SK-N-SH (cell line): ENCODE measurements at regions of chr11 and their contacts with region 1.

Region 1: GRCh38 chr11:66976048-66976467 is 954 bp downstream of the C11orf86 start:
- DNase-seq: peak; percentile 86
- H3K4me3 ChIP-seq: no peak overlapping the region; a peak in 1 of 4 replicates
- H3K27ac ChIP-seq: no peak overlapping the region
- H3K4me1 ChIP-seq: peaks cover 0 to 11% of the 10 kb centered on the region in 2 experiments; a peak in 2 of 4 replicates
- H3K27me3 ChIP-seq: no peaks in the 10 kb centered on the region
- CTCF ChIP-seq: peak; percentile 86
- EP300 ChIP-seq: no peak
- RAD21 ChIP-seq: peak; percentile 90

Region 2: GRCh38 chr11:66834501-66834845 is 141.6 kb before region 1 on chr11:
- CTCF ChIA-PET with region 1: interaction called, 24 read pairs
- POLR2A ChIA-PET with region 1: no interaction called
- DNase-seq: no peak
- H3K4me3 ChIP-seq: no peak overlapping the region
- H3K27ac ChIP-seq: no peak overlapping the region
- H3K4me1 ChIP-seq: peaks cover 0 to 5% of the 10 kb centered on the region in 2 experiments; a peak in 1 of 4 replicates
- H3K27me3 ChIP-seq: no peaks in the 10 kb centered on the region
- CTCF ChIP-seq: no peak
- EP300 ChIP-seq: no peak
- RAD21 ChIP-seq: no peak

Region 3: DNA sequence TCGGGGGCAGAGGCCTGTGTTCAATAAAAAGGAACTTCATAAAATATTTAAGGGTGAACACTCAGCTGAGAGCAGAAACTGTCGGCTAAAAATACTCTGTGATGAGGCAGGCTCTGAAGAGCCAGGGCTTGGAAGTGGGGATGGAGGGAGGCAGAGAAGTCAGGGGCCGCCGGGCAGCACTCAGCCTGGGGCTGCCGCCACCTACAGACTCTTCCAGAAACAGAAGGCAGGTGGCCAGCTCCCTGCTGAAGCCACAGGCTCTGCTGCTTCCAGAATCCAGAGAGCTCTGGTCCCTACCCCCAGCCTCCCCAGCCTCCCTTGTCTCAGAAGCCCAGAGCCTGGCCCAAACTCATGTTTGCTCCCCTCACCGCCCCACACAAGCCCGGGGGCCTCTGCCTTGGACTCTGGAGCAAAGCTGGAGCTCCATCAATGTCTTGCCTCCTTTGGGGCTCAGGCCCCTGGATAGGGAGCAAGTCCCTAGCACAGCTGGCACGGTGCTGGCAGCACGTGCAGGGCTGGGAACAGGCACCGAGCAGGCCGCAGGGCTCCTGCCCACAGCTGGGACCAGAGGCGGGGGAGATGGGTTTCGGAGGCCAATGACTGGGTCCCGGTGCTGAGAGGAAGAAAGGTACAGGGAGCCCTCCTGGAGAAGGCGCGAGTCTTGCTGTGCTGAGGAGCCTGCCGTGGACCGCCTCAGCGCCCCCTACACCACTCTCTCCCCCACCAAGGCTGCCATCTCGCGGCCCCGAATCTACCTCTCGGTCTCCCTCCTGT is 110.9 kb before region 1 on chr11:
- CTCF ChIA-PET with region 1: interaction called, 12 read pairs
- POLR2A ChIA-PET with region 1: no interaction called
- DNase-seq: no peak
- H3K4me3 ChIP-seq: no peak overlapping the region
- H3K27ac ChIP-seq: no peak overlapping the region
- H3K4me1 ChIP-seq: no peaks in the 10 kb centered on the region
- H3K27me3 ChIP-seq: no peaks in the 10 kb centered on the region
- CTCF ChIP-seq: no peak
- EP300 ChIP-seq: no peak
- RAD21 ChIP-seq: no peak

Region 4: DNA sequence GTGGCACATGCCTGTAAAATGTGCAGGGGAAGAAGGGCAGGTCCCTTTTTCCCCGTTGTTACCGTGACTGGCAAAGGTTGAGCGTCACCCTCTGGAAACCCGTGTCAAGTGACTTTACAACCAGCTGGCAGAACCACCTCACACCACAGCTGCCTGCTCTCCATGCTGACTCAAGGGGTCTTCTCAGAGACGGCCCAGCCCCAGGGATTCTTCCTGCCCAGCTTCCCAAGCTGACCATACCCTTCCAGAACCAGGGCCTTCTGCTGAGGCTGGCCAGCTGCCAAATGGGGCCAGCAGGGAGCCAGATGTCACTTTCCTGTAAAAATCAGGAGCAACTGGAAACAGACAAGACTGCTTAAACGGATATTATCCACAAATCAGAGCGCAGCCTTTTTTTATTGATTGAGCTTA is 24.1 kb before region 1 on chr11:
- CTCF ChIA-PET with region 1: interaction called, 54 read pairs
- POLR2A ChIA-PET with region 1: no interaction called
- DNase-seq: peak; percentile 91
- H3K4me3 ChIP-seq: no peak overlapping the region
- H3K27ac ChIP-seq: peak overlapping the region; percentile 2 to 75; a peak in 3 of 4 replicates
- H3K4me1 ChIP-seq: peaks cover 11 to 45% of the 10 kb centered on the region in 2 experiments
- H3K27me3 ChIP-seq: no peaks in the 10 kb centered on the region
- CTCF ChIP-seq: no peak
- EP300 ChIP-seq: peak in 1 of 2 experiments; percentile 67; a peak in 1 of 4 replicates
- RAD21 ChIP-seq: peak; percentile 13; the same call in 1 of the 2 replicates

Region 5: GRCh38 chr11:66987158-66987620 is 11.1 kb after region 1 on chr11:
- CTCF ChIA-PET with region 1: interaction called, 20 read pairs
- POLR2A ChIA-PET with region 1: no interaction called
- DNase-seq: peak; percentile 48
- H3K4me3 ChIP-seq: no peak overlapping the region
- H3K27ac ChIP-seq: no peak overlapping the region
- H3K4me1 ChIP-seq: peaks cover 2 to 12% of the 10 kb centered on the region in 2 experiments; a peak in 2 of 4 replicates
- H3K27me3 ChIP-seq: no peaks in the 10 kb centered on the region
- CTCF ChIP-seq: no peak
- EP300 ChIP-seq: no peak
- RAD21 ChIP-seq: no peak

Region 6: DNA sequence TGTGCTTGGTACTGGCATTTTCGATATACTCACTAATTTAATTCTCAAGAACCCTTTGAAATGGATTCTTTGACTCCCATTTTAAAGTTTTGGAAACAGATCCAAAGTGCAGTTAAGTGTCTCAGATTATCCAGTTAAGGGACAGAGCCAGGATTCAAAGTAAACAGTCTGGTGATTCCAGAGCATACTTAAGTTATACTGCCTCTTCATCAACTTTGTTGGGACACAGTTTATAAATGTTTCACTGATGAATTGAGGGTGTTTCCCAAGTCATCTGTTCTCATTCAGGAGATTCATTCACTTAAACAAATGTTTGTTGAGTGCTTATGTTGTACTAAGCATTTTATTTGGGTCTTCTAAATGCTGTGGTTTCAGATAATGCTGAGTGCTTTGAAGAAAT is 160.1 kb after region 1 on chr11:
- CTCF ChIA-PET with region 1: no interaction called
- POLR2A ChIA-PET with region 1: no interaction called
- DNase-seq: no peak
- H3K4me3 ChIP-seq: no peak overlapping the region
- H3K27ac ChIP-seq: no peak overlapping the region
- H3K4me1 ChIP-seq: no peaks in the 10 kb centered on the region
- H3K27me3 ChIP-seq: no peaks in the 10 kb centered on the region
- CTCF ChIP-seq: no peak
- EP300 ChIP-seq: no peak
- RAD21 ChIP-seq: no peak